Panc1 (cell line): ENCODE measurements at regions of chr5 and their contacts with region 1.

Region 1: DNA sequence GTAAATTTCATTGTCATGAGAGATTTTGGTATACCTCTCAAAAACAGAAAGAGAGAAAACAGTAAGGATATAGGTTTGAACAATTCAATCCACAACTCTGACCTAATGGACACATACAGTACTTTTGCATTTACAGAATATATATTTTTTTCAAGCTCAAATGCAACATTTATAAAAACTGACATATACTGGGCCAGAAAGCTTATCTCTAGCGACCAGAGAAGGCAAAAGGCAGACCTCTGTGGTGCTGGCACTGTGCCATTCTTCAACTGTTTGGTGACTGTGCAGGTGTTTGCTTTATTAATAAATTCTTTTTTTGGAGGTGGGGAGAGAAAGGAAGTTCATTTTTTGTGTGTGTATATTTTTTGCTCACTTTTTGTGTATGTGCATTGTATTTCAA is 6.0 kb upstream of the PLAC8L1 start:
- DNase-seq: no peak
- ATAC-seq: no peak
- H3K4me3 ChIP-seq: no peak overlapping the region
- H3K27ac ChIP-seq: no peak overlapping the region
- H3K4me1 ChIP-seq: no peaks in the 10 kb centered on the region
- H3K27me3 ChIP-seq: no peaks in the 10 kb centered on the region
- CTCF ChIP-seq: no peak

Region 2: DNA sequence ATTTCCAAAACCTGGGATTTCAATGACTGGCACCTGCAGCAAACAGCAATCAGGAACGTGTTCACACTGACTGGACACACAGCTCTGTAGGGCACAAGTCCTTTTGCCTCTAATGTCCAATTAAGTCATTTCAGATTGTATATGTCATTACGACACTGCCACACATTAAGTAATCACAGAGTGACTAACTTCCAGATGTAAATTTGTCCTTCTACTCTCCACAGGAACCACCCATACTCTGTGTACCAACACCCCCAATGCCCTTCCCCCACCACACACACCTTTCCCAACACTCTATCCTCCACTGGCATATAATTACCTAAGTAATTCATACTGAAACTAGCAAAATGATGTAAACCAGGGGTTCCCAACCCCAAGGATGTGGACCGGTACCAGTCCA is 40.6 kb after region 1 on chr5:
- CTCF ChIA-PET with region 1: interaction called, 12 read pairs
- POLR2A ChIA-PET with region 1: no interaction called
- in situ Hi-C with region 1: no loop called
- intact Hi-C with region 1: no loop called
- DNase-seq: no peak
- ATAC-seq: no peak
- H3K4me3 ChIP-seq: no peak overlapping the region
- H3K27ac ChIP-seq: no peak overlapping the region
- H3K4me1 ChIP-seq: no peaks in the 10 kb centered on the region
- H3K27me3 ChIP-seq: no peaks in the 10 kb centered on the region
- CTCF ChIP-seq: no peak

Region 3: DNA sequence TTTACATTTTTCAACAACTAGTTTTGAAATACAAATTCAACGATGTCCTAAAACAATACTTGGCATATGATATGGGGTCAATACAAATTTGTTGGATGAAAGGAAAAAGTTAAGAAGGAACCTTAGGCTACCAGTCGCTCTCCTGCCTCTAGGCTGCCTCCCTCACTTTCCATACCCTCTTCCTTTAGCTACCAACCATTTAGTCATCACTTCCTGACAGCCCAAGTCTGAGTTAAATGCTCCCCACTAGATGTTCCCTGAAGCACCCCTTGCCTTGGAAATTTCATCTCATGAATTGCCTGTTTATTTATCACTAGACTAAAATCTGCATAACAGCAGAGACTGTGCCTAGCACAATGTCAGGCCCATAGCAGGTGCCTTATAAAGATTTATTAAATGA is 73.8 kb after region 1 on chr5:
- CTCF ChIA-PET with region 1: no interaction called
- POLR2A ChIA-PET with region 1: no interaction called
- in situ Hi-C with region 1: no loop called
- intact Hi-C with region 1: no loop called
- DNase-seq: no peak
- ATAC-seq: no peak
- H3K4me3 ChIP-seq: no peak overlapping the region
- H3K27ac ChIP-seq: no peak overlapping the region
- H3K4me1 ChIP-seq: no peaks in the 10 kb centered on the region; the same call in 1 of the 2 replicates
- H3K27me3 ChIP-seq: no peaks in the 10 kb centered on the region
- CTCF ChIP-seq: no peak